Caco-2 (cell line): ENCODE measurements at regions of chr20 and their contacts with region 1.

Region 1: GRCh38 chr20:44475694-44476560 is at the start of gene TTPAL:
- DNase-seq: peak; percentile 95 to 99
- H3K4me3 ChIP-seq: peak within 1 kb of the TSS; percentile 89
- H3K4me3 Mint-ChIP-seq: peak within 1 kb of the TSS; percentile 98
- H3K27ac Mint-ChIP-seq: peak within 1 kb of the TSS; percentile 96
- H3K4me1 ChIP-seq: peaks cover 19% of the 10 kb centered on the region
- H3K4me1 Mint-ChIP-seq: peaks cover 25% of the 10 kb centered on the region
- H3K27me3 ChIP-seq: no peaks in the 10 kb centered on the region
- H3K27me3 Mint-ChIP-seq: no peaks in the 10 kb centered on the region
- CTCF ChIP-seq: peak; percentile 28 to 78
- total RNA-seq, gene TTPAL: 53.9 and 54.6 TPM in 2 replicates

Region 2: DNA sequence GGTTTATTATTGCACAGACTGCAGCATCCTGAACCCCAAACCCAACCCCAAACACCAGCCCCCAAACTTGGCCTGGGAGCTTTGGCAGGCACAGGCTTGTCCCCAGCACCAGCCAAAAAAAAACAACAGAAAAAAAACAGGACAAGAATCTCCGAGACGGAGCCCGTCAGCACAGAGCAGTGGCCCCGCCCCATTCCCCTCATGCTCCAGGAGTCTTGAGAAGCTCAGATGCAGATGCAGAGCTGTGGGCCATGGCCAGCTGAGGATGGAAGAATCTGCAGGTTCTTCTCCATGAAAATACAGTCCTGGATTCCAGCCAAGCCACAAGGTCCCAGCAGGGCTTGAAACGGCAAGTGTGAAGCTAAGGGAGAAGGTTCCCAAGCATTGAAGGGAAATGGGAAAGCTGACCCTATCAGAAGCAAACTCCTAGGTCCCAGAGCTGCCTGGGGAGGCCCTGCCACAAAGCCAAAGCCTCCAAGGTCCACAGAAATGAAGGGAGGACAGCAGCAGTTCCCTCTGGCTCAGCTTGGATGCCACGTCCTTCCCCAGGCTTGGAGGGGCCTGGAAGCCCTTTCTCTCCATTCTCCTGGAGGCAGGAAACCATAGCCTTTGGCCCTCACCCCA is 364.1 kb before region 1 on chr20:
- CTCF ChIA-PET with region 1: interaction called, 35 read pairs
- POLR2A ChIA-PET with region 1: no interaction called
- intact Hi-C with region 1: loop called (anchors 1 kb)
- DNase-seq: peak in 1 of 2 experiments; percentile 47
- H3K4me3 ChIP-seq: no peak overlapping the region
- H3K4me3 Mint-ChIP-seq: no peak overlapping the region
- H3K27ac Mint-ChIP-seq: no peak overlapping the region
- H3K4me1 ChIP-seq: no peaks in the 10 kb centered on the region
- H3K4me1 Mint-ChIP-seq: no peaks in the 10 kb centered on the region
- H3K27me3 ChIP-seq: no peaks in the 10 kb centered on the region
- H3K27me3 Mint-ChIP-seq: peaks cover 2% of the 10 kb centered on the region
- CTCF ChIP-seq: no peak

Region 3: DNA sequence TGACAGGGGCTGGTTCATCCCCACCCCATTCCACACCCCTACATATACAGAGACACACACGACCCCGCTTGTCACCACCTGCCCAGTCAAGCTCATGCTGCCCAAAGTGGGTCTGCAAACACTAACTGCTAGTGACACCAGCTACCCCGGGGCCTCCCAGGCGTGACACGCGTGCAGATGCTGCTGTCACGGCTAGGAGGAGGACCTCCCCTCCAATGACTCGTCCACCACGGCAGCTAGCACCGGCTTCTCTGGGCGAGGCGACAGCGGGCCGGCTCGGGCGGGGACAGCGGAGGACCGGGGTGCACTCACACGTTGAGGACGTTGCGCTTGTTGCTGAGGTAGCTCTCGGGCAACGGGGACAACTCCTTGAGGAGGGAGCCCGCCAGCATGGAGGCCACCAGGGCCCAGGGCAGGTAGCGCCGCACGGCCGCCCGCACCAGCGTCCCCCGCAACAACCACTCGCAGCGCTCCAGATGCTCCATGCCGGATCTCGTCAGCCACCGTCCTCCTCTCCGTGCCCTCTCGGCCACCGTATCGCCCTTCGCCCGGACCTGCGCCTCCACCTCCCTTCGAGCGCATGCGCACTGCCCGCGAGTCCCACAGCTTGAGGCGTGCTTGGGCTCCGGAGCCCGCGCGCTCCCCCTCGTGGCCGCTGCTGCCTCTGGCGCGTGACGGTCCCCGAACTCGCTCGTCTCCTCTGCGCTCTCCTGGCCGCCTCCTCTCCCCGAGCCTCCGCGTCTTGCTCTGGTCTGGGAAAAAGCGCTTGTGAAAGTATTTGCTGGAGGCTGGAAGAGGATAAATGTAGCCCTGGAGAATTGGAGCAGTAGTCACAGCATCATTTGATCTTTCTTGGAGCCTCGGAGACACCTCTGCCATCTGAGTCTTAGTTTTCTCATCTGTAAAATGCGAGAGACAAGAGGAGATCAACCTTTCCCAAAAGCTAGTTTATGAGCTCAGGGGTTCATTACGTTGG is 165.0 kb before region 1 on chr20 and contains the start of gene FITM2:
- CTCF ChIA-PET with region 1: interaction called, 36 read pairs
- POLR2A ChIA-PET with region 1: interaction called, 8 read pairs
- intact Hi-C with region 1: loop called (anchors 2 kb)
- DNase-seq: peak; percentile 100
- H3K4me3 ChIP-seq: peak within 1 kb of the TSS; percentile 77
- H3K4me3 Mint-ChIP-seq: peak within 1 kb of the TSS; percentile 84
- H3K27ac Mint-ChIP-seq: peak within 1 kb of the TSS; percentile 48
- H3K4me1 ChIP-seq: peaks cover 10% of the 10 kb centered on the region
- H3K4me1 Mint-ChIP-seq: peaks cover 13% of the 10 kb centered on the region
- H3K27me3 ChIP-seq: no peaks in the 10 kb centered on the region
- H3K27me3 Mint-ChIP-seq: no peaks in the 10 kb centered on the region
- CTCF ChIP-seq: peak; percentile 100
- total RNA-seq, gene FITM2: 13.9 and 14.4 TPM in 2 replicates

Region 4: DNA sequence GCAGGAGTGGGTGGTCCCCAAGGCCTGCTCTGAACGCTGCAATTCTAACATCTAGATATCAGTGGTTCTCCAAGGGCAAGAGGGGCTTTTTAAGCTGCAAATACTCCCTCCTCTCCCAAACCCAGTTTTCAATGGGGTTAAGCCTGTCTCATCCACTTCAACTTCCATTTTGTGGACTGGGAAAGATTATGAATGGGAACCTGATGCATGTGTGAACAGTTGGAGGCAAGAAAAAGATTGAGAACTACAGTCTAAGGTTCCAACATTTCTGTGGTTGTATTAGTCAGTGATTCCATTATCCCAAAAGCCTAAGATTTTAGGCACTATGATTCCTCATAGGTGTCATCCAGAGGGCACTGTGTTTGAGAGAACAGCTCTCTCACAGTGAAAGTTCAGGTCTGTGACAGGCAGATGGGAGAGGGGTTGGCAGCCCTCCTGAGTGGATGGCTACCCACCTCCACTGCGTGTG is 66.8 kb before region 1 on chr20:
- CTCF ChIA-PET with region 1: interaction called, 14 read pairs
- POLR2A ChIA-PET with region 1: no interaction called
- intact Hi-C with region 1: no loop called
- DNase-seq: no peak
- H3K4me3 ChIP-seq: no peak overlapping the region
- H3K4me3 Mint-ChIP-seq: no peak overlapping the region
- H3K27ac Mint-ChIP-seq: peak overlapping the region; percentile 86
- H3K4me1 ChIP-seq: peaks cover 97% of the 10 kb centered on the region
- H3K4me1 Mint-ChIP-seq: peaks cover 74% of the 10 kb centered on the region
- H3K27me3 ChIP-seq: no peaks in the 10 kb centered on the region
- H3K27me3 Mint-ChIP-seq: no peaks in the 10 kb centered on the region
- CTCF ChIP-seq: no peak

Region 5: GRCh38 chr20:44504402-44505315 is 28.7 kb after region 1 on chr20:
- CTCF ChIA-PET with region 1: interaction called, 7 read pairs
- POLR2A ChIA-PET with region 1: interaction called, 10 read pairs
- intact Hi-C with region 1: no loop called
- DNase-seq: peak in 1 of 2 experiments; percentile 85
- H3K4me3 ChIP-seq: no peak overlapping the region
- H3K4me3 Mint-ChIP-seq: peak overlapping the region; percentile 0
- H3K27ac Mint-ChIP-seq: peak overlapping the region; percentile 7
- H3K4me1 ChIP-seq: peaks cover 31% of the 10 kb centered on the region
- H3K4me1 Mint-ChIP-seq: peaks cover 5% of the 10 kb centered on the region
- H3K27me3 ChIP-seq: no peaks in the 10 kb centered on the region
- H3K27me3 Mint-ChIP-seq: no peaks in the 10 kb centered on the region
- CTCF ChIP-seq: no peak

Region 6: GRCh38 chr20:44576297-44576696 is 100.4 kb after region 1 on chr20:
- CTCF ChIA-PET with region 1: no interaction called
- POLR2A ChIA-PET with region 1: no interaction called
- intact Hi-C with region 1: no loop called
- DNase-seq: peak in 1 of 2 experiments; percentile 48
- H3K4me3 ChIP-seq: no peak overlapping the region
- H3K4me3 Mint-ChIP-seq: no peak overlapping the region
- H3K27ac Mint-ChIP-seq: no peak overlapping the region
- H3K4me1 ChIP-seq: 0 out of 2 replicates have a peak, but pooled peaks cover 9% of the 10 kb centered on the region
- H3K4me1 Mint-ChIP-seq: peaks cover 21% of the 10 kb centered on the region
- H3K27me3 ChIP-seq: no peaks in the 10 kb centered on the region
- H3K27me3 Mint-ChIP-seq: no peaks in the 10 kb centered on the region
- CTCF ChIP-seq: peak; percentile 44 to 62

Region 7: DNA sequence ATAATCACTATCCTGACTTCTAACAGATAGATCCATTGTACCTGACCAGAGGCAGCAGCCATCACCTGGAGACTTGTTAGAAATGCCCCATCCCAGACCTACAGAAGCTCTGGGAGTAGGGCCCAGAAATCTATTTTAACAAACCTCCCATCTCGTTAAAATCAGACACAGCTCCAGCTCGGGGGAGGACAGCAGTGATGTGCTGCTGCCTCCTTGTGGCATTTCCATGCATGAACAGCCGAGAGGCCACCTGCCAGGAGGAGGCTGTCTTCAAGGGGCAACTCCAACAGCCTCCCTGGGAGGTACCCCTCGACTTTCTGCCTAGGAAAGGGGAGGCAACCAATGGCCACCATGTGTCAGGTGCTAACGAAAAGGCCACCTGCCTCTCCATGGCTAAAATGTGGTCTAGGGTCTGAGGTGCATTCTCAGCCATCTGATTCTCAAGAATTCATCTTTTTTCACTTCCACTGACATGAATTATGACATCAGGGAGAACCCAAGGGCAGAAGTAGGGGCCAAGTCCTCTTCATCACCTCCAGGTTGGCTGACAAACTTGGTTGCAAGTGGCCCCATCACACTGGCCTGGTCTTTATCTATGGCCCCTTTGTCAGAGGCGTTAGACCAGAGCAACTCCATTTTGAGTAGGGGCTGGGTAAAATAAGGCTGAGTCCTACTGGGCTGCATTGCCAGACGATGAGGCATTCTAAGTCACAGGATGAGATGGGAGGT is 257.6 kb after region 1 on chr20:
- CTCF ChIA-PET with region 1: interaction called, 4 read pairs
- POLR2A ChIA-PET with region 1: no interaction called
- intact Hi-C with region 1: loop called (anchors 10 kb)
- DNase-seq: peak; percentile 82 to 89
- H3K4me3 ChIP-seq: no peak overlapping the region
- H3K4me3 Mint-ChIP-seq: no peak overlapping the region
- H3K27ac Mint-ChIP-seq: peak overlapping the region; percentile 9
- H3K4me1 ChIP-seq: peaks cover 36% of the 10 kb centered on the region
- H3K4me1 Mint-ChIP-seq: peaks cover 44% of the 10 kb centered on the region
- H3K27me3 ChIP-seq: no peaks in the 10 kb centered on the region
- H3K27me3 Mint-ChIP-seq: no peaks in the 10 kb centered on the region
- CTCF ChIP-seq: peak; percentile 95 to 98